Heart right ventricle (tissue), 16 donors: ENCODE measurements at regions of chr1 and their contacts with region 1.

Region 1: GRCh38 chr1:19477284-19478249 is 7.8 kb downstream of the CAPZB start:
- DNase-seq: no peak
- ATAC-seq: peak in 7 of 8 donors; percentile 35 to 73 (median 48)
- H3K4me3 ChIP-seq: peak overlapping the region in 2 of 10 donors; percentile 1 to 37
- H3K27ac ChIP-seq: peak overlapping the region in 8 of 10 donors; percentile 1 to 95 (median 47)
- H3K4me1 ChIP-seq: peaks cover 32 to 99% (median 85%) of the 10 kb centered on the region in 9 donors
- H3K27me3 ChIP-seq: no peaks in the 10 kb centered on the region
- CTCF ChIP-seq: no peak

Region 2: DNA sequence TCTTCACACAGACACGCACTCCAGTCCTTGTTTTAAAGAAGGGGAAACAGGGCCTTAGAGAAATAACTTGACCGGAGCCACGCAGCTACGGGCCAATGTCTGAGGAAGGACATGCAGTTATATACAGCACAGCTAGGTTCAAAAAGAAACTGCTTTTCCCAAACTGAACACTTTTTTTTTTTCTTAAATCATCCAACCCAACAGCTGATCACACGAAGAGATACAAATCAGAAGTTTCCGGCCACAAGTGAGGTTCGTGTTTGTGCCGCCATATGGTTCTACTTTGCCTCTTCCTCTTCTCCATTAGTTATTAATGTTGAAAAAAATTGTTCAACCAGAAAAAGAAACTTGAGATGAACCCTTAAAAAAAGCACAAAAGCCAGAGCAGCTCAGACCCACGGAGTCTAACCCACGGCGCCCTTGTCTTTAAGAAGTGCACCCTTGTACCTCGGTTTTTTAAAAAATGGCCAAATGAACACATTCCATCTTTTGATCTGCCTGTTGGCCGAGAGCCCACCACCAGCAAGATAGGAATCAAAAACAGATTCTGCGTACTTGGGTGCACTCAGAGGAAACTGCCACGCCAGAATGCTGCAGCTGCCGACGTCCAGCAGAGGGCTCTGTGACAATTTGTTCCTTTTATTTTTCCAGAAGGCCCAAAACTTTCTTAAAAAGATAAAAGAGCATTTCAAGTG is 86.5 kb before region 1 on chr1:
- intact Hi-C with region 1: loop called in 4 of 10 experiments (anchors 5 to 10 kb)
- DNase-seq: peak; percentile 53 to 73
- ATAC-seq: peak in 7 of 8 donors; percentile 30 to 66 (median 58)
- H3K4me3 ChIP-seq: peak overlapping the region in 6 of 10 donors; percentile 22 to 39 (median 26)
- H3K27ac ChIP-seq: peak overlapping the region; percentile 2 to 87 (median 70)
- H3K4me1 ChIP-seq: peaks cover 16 to 87% (median 59%) of the 10 kb centered on the region in 9 donors
- H3K27me3 ChIP-seq: no peaks in the 10 kb centered on the region
- CTCF ChIP-seq: peak; percentile 56 to 94 (median 78)

Region 3: GRCh38 chr1:19439464-19440171 is 37.9 kb before region 1 on chr1:
- intact Hi-C with region 1: loop called in 3 of 10 experiments (anchors 5 to 10 kb)
- DNase-seq: peak in 1 of 2 donors; percentile 50
- ATAC-seq: peak in 7 of 8 donors; percentile 10 to 80 (median 40)
- H3K4me3 ChIP-seq: no peak overlapping the region
- H3K27ac ChIP-seq: peak overlapping the region; percentile 75 to 93 (median 84)
- H3K4me1 ChIP-seq: peaks cover 44 to 100% (median 98%) of the 10 kb centered on the region in 9 donors
- H3K27me3 ChIP-seq: no peaks in the 10 kb centered on the region
- CTCF ChIP-seq: peak in 8 of 9 donors; percentile 9 to 58 (median 42)